A549 (cell line): ENCODE measurements at regions of chr1 and their contacts with region 1.

Region 1: GRCh38 chr1:178037503-178038253 is 56.2 kb upstream of the RASAL2 start:
- DNase-seq: peak; percentile 83 to 88
- ATAC-seq: peak; percentile 99
- H3K4me3 ChIP-seq: peak overlapping the region; percentile 59
- H3K27ac ChIP-seq: peak overlapping the region; percentile 85 to 89
- H3K4me1 ChIP-seq: peaks cover 10% of the 10 kb centered on the region
- CTCF ChIP-seq: peak; percentile 47
- EP300 ChIP-seq: no peak
- POLR2A ChIP-seq: peak; percentile 81
- RAD21 ChIP-seq: peak in 1 of 2 experiments; percentile 36; a peak in 2 of 5 replicates

Region 2: GRCh38 chr1:177948336-177948972 is 89.2 kb before region 1 on chr1:
- CTCF ChIA-PET with region 1: interaction called, 22 read pairs
- POLR2A ChIA-PET with region 1: no interaction called
- DNase-seq: peak; percentile 64 to 66
- ATAC-seq: peak; percentile 61 to 86; a peak in 5 of 6 replicates
- H3K4me3 ChIP-seq: no peak overlapping the region
- H3K27ac ChIP-seq: no peak overlapping the region
- H3K4me1 ChIP-seq: no peaks in the 10 kb centered on the region
- CTCF ChIP-seq: peak; percentile 83
- EP300 ChIP-seq: no peak
- POLR2A ChIP-seq: no peak
- RAD21 ChIP-seq: peak; percentile 70 to 72

Region 3: DNA sequence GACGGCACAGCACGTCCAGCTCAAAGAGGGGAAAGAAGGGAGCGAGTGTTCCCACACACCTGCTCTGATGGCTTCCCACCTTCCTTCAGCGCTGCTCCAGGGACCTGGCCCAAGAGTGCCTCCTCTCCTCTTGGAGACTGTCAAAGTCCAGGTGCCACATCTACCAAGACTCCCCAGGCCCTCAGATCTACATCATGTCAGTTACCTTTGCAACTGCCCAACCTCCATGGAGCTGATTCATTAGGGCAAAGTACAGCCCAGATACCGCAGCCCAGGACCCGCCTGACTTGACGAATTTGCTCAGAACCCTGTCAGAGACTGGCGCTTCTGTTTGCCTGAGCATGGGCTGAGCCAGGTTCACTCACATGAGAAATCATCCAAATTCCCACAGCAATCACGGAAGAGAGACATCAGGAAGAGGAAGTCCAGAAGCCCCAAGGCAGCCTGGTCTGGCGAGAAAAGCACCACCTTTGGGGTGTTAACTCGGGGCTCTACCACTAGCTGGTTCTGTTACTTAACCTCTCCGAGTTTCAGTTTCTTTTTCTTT is 67.8 kb before region 1 on chr1 and contains the start of gene SEC16B:
- CTCF ChIA-PET with region 1: interaction called, 10 read pairs
- POLR2A ChIA-PET with region 1: interaction called, 3 read pairs
- DNase-seq: peak; percentile 18 to 80
- ATAC-seq: peak; percentile 90 to 93
- H3K4me3 ChIP-seq: peak within 1 kb of the TSS; percentile 24
- H3K27ac ChIP-seq: peak within 1 kb of the TSS; percentile 69 to 81
- H3K4me1 ChIP-seq: peaks cover 22% of the 10 kb centered on the region
- CTCF ChIP-seq: no peak
- EP300 ChIP-seq: no peak
- POLR2A ChIP-seq: no peak
- RAD21 ChIP-seq: no peak
- polyA plus RNA-seq, gene SEC16B: 2.6 and 3.0 TPM in 2 replicates

Region 4: DNA sequence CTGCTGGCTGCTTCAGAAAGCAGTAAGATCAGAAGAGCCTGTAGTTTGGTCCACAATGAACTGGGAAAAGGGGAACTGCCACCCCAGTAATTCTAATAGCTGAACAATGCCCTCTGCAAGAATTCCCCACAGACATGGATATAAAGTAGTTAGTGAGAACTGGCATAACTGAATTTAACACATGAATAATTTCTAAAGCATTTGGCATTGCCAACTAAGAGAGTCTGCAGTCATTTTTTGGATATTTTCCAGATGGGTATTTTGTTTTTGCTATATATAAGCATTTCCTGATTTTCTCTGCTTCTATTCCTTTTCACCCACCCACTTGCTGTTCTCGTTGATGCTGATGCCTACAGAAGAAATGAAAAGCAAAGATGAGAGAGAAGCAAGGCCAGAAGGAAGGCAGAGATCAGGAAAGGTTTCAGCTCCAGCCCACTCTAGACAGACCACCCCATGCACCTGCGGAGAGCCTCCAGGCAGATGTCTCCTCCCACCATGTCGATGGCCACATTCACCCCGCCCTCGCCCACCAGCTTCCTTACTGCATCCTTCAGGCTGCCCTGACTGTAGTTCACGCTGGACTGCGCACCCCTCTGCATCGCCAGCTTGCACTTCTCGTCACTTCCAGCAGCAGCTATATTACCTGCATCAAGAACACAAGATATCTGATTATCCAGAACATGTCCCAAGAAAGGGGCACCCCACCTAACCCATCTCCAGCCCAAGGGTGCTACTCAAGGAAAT is 11.9 kb before region 1 on chr1:
- CTCF ChIA-PET with region 1: interaction called, 16 read pairs
- POLR2A ChIA-PET with region 1: no interaction called
- DNase-seq: no peak
- ATAC-seq: no peak
- H3K4me3 ChIP-seq: no peak overlapping the region
- H3K27ac ChIP-seq: no peak overlapping the region
- H3K4me1 ChIP-seq: peaks cover 13% of the 10 kb centered on the region; the same call in 2 of the 3 replicates
- CTCF ChIP-seq: no peak
- EP300 ChIP-seq: no peak
- POLR2A ChIP-seq: no peak
- RAD21 ChIP-seq: no peak

Region 5: DNA sequence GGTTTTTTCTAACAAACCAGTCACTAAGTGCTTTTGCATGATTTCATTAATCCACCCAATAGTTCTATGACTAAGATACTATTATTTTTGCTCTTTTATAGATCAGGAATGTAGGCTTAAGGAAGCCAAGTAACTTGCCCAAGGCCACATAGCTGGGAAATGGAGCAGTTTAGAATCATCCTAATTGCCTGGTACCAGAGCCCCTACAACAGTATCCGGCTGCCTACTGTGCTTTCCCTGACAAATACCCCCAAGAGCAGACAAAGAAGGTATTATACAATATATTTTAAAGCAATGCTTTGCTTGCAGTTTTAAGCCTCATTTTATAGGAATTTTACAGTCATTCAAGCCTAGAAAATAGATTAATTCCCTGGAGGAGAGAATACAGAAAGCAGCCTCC is 10.7 kb after region 1 on chr1:
- CTCF ChIA-PET with region 1: interaction called, 24 read pairs
- POLR2A ChIA-PET with region 1: interaction called, 4 read pairs
- DNase-seq: no peak
- ATAC-seq: peak in 1 of 2 experiments; percentile 35; a peak in 2 of 6 replicates
- H3K4me3 ChIP-seq: no peak overlapping the region
- H3K27ac ChIP-seq: peak overlapping the region in 1 of 2 experiments; percentile 51; a peak in 3 of 6 replicates
- H3K4me1 ChIP-seq: peaks cover 39% of the 10 kb centered on the region
- CTCF ChIP-seq: no peak
- EP300 ChIP-seq: no peak
- POLR2A ChIP-seq: no peak
- RAD21 ChIP-seq: no peak

Region 6: DNA sequence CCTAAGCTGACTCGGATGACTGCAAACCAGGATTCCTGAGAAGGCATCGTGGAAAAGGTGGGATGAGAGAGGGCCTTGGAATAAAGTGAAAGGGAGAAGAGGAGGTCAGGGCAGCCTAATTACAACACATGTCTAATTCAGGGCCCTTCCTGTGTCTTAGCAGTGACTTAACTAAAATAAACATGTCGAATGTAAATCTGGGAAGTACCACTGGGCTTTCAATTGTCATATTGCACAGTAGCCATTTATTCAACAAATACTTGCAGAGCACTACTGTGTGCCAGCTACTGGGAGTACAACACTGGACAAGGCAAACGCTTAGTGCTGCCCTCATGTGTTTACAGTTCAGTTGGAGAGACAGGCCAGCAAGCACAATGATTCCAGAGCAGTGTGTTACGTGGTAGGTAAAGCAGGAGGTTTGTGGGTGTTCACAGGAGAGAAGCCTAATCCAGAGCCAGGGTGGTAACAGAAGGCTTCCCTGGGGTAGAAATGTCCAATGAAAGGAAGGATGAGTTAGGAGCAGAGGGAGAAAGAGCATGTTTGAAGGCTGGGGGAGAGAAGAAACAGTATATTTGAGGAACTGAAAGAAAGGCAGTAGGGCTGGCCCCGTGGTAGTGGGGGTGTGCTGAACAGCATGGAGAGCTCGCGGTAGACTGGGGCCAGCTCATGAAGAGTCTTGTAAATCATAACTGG is 18.2 kb after region 1 on chr1:
- CTCF ChIA-PET with region 1: interaction called, 24 read pairs
- POLR2A ChIA-PET with region 1: interaction called, 4 read pairs
- DNase-seq: peak; percentile 66 to 81
- ATAC-seq: peak; percentile 88 to 93
- H3K4me3 ChIP-seq: no peak overlapping the region
- H3K27ac ChIP-seq: peak overlapping the region; percentile 58 to 84
- H3K4me1 ChIP-seq: peaks cover 53% of the 10 kb centered on the region
- CTCF ChIP-seq: peak; percentile 47
- EP300 ChIP-seq: no peak
- POLR2A ChIP-seq: no peak
- RAD21 ChIP-seq: peak; percentile 32 to 43

Region 7: DNA sequence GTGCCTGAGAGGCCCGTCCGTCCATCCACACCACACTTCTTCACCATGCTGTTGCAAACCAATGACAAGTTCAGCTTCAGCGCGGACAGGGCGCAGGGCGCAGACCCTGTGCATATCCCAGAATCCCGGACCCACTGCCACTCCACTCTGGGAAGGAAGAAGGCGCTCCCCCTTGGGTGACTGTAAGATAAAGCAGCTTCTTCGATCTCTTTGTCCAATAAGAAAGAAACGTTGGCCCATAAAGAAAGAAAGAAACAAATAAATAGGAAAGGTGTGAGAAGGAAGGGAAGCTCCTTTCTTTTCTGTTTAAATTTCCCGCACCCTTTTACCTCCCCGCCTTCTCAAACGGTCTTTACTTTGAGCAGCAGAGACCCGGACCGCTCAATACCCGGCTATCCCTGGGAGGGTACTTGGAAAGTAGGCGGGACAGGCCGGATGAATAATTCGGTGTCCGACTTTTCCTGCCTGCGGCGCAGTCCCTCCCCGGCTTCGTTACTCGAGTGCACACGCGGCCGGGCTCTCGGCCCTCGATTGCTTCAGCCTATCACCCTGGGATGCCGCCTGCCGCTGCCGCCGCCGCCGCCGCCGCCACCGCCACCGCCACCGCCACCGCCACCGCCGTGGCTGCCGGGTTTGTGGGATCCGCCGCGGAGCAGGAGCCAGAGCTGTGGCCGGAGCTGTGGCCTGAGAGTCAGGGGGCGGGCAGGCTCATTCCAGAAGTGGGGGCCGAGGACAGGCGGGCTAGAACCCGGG is 55.7 kb after region 1 on chr1:
- CTCF ChIA-PET with region 1: interaction called, 16 read pairs
- POLR2A ChIA-PET with region 1: interaction called, 8 read pairs
- DNase-seq: peak; percentile 96 to 98
- ATAC-seq: peak; percentile 78 to 88
- H3K4me3 ChIP-seq: peak overlapping the region; percentile 90
- H3K27ac ChIP-seq: peak overlapping the region; percentile 85 to 97
- H3K4me1 ChIP-seq: peaks cover 46% of the 10 kb centered on the region
- CTCF ChIP-seq: peak; percentile 14; the same call in 1 of the 3 replicates
- EP300 ChIP-seq: no peak
- POLR2A ChIP-seq: peak; percentile 37
- RAD21 ChIP-seq: no peak; a peak in 1 of 5 replicates